ENCODE measurements at regions of chr7 and their contacts with region 1.

Region 1: DNA sequence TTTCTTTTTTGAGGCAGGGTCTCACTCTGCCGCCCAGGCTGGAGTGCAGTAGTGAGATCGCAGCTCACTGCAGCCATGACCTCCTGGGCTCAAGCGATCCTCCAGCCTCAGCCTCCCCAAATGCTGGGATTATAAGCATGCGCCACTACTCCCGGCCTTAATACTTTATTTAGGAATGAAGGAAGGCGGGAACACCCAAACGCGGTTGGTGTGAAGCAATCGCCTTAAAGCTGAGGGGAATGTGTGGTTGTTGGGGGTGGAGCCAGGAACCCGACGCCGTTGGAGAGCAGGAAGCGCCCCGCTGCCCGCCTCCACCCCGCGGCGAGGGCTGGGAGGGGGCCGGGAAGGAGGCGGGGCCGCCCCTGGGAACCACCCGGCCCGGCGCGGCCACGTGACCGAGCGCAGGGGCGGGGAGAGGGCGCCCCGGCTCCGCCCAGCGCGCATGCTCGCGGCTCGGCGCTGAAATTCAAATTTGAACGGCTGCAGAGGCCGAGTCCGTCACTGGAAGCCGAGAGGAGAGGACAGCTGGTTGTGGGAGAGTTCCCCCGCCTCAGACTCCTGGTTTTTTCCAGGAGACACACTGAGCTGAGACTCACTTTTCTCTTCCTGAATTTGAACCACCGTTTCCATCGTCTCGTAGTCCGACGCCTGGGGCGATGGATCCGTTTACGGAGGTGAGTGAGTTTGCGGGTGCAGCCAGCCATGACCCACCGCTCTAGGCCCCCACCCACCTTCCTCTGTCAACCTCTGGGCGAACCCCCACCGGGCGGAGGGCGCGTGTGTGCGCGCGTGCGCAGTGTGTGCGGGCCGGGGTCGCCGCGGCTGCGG is at the start of gene ANLN:
- DNase-seq: peak; percentile 94 to 97
- H3K4me3 ChIP-seq: peak within 1 kb of the TSS; percentile 57 to 69
- H3K27ac ChIP-seq: peak within 1 kb of the TSS; percentile 72 to 76
- H3K4me1 ChIP-seq: peaks cover 0 to 46% (median 20%) of the 10 kb centered on the region in 4 donors
- H3K27me3 ChIP-seq: no peaks in the 10 kb centered on the region
- CTCF ChIP-seq: no peak

Region 2: DNA sequence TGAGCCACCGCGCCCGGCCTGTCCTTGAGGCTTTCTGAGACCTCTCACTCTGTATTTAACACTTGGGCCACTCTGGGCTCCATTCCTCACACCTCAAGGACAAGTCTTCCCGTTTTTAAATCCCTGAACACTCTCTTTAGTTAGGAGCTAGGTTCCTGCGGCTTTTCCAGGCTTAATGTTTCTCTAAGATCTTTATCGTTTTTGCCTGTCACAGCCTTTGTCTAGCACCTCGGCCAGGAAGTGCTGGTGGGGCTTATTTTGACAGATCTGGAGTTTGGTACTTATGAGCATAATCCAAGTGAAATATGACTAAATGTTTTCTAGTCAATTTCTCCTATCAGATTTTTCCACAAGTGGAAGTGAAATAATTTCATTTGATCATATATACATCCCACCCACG is 1538.9 kb before region 1 on chr7:
- intact Hi-C with region 1: loop called (anchors 5 kb)
- DNase-seq: no peak
- H3K4me3 ChIP-seq: no peak overlapping the region
- H3K27ac ChIP-seq: no peak overlapping the region
- H3K4me1 ChIP-seq: no peaks in the 10 kb centered on the region
- H3K27me3 ChIP-seq: no peaks in the 10 kb centered on the region
- CTCF ChIP-seq: no peak

Region 3: DNA sequence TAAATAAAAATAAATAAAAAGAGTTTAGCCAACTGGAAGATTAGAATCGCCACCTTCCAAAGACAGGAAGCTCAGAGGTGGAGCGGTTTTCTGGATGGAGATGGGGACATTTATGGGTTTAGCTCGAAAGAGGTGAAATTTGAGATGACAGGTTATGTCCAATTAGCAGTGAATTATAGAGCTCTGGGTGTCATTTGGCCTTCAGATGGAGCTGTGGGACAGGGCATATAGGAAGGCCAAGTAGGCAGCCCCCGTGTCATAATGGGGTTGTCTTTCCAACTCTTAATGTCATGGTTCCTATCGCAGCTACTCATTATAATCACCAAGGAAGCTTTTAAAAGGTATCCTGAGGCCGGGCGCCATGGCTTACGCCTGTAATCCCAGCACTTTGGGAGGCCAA is 257.6 kb before region 1 on chr7:
- intact Hi-C with region 1: loop called (anchors 10 kb)
- DNase-seq: no peak
- H3K4me3 ChIP-seq: no peak overlapping the region
- H3K27ac ChIP-seq: no peak overlapping the region
- H3K4me1 ChIP-seq: peaks cover 0 to 38% (median 23%) of the 10 kb centered on the region in 4 donors
- H3K27me3 ChIP-seq: no peaks in the 10 kb centered on the region
- CTCF ChIP-seq: no peak

Region 4: GRCh38 chr7:36366718-36367560 is 22.6 kb before region 1 on chr7:
- intact Hi-C with region 1: loop called (anchors 2 kb)
- DNase-seq: peak; percentile 73 to 89
- H3K4me3 ChIP-seq: peak overlapping the region; percentile 82 to 99
- H3K27ac ChIP-seq: peak overlapping the region; percentile 74 to 87
- H3K4me1 ChIP-seq: peaks cover 0 to 7% (median 5%) of the 10 kb centered on the region in 4 donors
- H3K27me3 ChIP-seq: no peaks in the 10 kb centered on the region
- CTCF ChIP-seq: peak; percentile 87 to 89

Measured in tibial artery (tissue), 4 donors.